RWPE1 (cell line): ENCODE measurements at regions of chr13 and their contacts with region 1.

Region 1: DNA sequence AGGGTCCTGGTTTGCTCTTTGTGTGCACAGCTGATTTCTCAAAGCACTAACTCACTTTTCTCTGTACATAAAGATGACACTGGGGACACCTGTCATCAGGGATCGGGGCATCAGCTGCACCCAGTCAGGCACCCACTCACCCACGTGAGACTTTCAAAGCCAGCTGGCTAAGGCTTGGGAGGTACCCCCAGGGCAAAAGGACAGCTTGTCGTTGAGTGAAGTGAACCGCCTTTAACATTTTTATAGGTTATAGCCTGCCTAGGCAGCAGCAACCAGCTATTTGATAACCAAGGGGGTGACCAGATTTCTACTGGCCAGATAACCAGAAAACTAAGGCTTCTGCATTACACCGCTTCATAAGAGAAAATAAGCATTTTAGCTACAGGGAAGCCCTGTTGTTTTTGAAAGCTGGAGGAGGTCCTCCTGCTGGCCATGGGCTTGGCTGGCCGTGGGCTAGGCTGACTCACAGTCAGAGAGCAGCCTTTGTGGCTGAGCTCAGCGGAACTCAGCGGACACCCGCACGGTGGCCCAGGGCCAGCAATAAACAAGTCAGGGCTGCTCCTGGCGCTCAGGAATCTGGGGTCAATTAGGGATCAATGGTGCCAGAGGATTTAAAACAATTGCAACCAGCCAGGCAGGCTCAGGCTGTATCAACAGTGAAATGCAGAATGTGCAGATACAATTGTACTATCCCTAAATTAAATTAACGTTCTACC is 57.1 kb downstream of the ALOX5AP start:
- DNase-seq: peak; percentile 91
- H3K27ac ChIP-seq: peak overlapping the region; percentile 80
- CTCF ChIP-seq: no peak; the same call in 1 of the 2 replicates

Region 2: GRCh38 chr13:30865123-30866049 is 72.9 kb after region 1 on chr13:
- CTCF ChIA-PET with region 1: interaction called, 11 read pairs
- POLR2A ChIA-PET with region 1: no interaction called
- DNase-seq: peak; percentile 80
- H3K27ac ChIP-seq: peak overlapping the region; percentile 80
- CTCF ChIP-seq: peak; percentile 95